ENCODE measurements at regions of chr4 and their contacts with region 1.

Region 1: GRCh38 chr4:99894161-99894997 is at the start of gene LAMTOR3:
- DNase-seq: peak; percentile 95 to 98 (median 96)
- H3K4me3 ChIP-seq: peak within 1 kb of the TSS; percentile 74 to 97 (median 87)
- H3K27ac ChIP-seq: peak within 1 kb of the TSS; percentile 92 to 95
- H3K4me1 ChIP-seq: peaks cover 8 to 22% (median 16%) of the 10 kb centered on the region in 4 experiments
- H3K27me3 ChIP-seq: no peaks in the 10 kb centered on the region

Region 2: GRCh38 chr4:99949034-99949998 is 54.9 kb after region 1 on chr4:
- CTCF ChIA-PET with region 1: interaction called, 14 read pairs
- POLR2A ChIA-PET with region 1: interaction called, 10 read pairs
- DNase-seq: peak; percentile 95 to 97 (median 96)
- H3K4me3 ChIP-seq: peak overlapping the region; percentile 90 to 99 (median 97)
- H3K27ac ChIP-seq: peak overlapping the region; percentile 68 to 88
- H3K4me1 ChIP-seq: peaks cover 17 to 46% (median 30%) of the 10 kb centered on the region in 4 experiments
- H3K27me3 ChIP-seq: no peaks in the 10 kb centered on the region

Region 3: DNA sequence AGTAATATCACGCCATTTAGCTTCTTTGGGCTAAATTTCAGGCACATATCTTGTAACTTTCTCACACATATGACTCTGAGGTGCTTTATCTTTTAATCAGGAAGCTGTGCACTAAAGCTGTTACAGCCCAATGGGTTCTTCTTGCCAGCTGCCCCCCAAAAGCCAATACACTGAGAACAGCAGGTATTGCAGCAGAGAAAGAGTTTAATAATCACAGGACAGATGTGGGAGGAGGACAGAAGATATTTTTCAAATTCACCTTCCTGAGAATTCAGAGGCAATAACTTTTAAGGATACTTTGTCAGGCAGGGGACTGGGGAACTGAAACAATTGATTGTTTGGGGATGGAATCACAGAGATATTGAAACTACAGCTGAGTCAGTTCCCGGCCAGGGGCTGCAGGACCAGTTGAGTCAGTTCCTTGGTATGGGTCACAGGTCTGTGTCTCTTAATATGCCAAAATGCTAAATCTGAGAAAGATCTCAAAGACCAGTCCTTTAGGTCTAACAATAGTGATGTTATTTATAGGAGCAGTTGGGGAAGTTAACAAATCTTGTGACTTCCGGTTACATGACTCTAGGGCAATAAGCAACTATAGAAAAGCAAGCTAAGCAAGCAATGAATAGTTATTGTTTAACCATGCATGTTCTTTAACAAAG is 267.8 kb after region 1 on chr4:
- CTCF ChIA-PET with region 1: no interaction called
- POLR2A ChIA-PET with region 1: no interaction called
- DNase-seq: no peak
- H3K4me3 ChIP-seq: no peak overlapping the region
- H3K27ac ChIP-seq: no peak overlapping the region
- H3K4me1 ChIP-seq: no peaks in the 10 kb centered on the region
- H3K27me3 ChIP-seq: peaks cover 0 to 2% (median 0%) of the 10 kb centered on the region in 5 experiments

Measured in common myeloid progenitor, CD34-positive (primary cell).